CD8-positive, alpha-beta T cell (primary cell): ENCODE measurements at regions of chr1 and their contacts with region 1.

Region 1: GRCh38 chr1:227855687-227856086 is 40.2 kb downstream of the PRSS38 start:
- DNase-seq: no peak
- ATAC-seq: no peak
- H3K4me3 ChIP-seq: no peak overlapping the region
- H3K4me3 Mint-ChIP-seq: no peak overlapping the region
- H3K27ac ChIP-seq: no peak overlapping the region
- H3K27ac Mint-ChIP-seq: no peak overlapping the region
- H3K4me1 ChIP-seq: no peaks in the 10 kb centered on the region
- H3K4me1 Mint-ChIP-seq: no peaks in the 10 kb centered on the region
- H3K27me3 ChIP-seq: no peaks in the 10 kb centered on the region
- H3K27me3 Mint-ChIP-seq: peaks cover 3% of the 10 kb centered on the region
- CTCF ChIP-seq: no peak

Region 2: GRCh38 chr1:227905573-227906487 is 50.1 kb after region 1 on chr1:
- CTCF ChIA-PET with region 1: no interaction called
- POLR2A ChIA-PET with region 1: no interaction called
- intact Hi-C with region 1: loop called in 1 of 2 experiments (anchors 2 kb)
- DNase-seq: peak in 1 of 9 experiments; percentile 11
- ATAC-seq: no peak
- H3K4me3 ChIP-seq: no peak overlapping the region
- H3K4me3 Mint-ChIP-seq: no peak overlapping the region
- H3K27ac ChIP-seq: no peak overlapping the region
- H3K27ac Mint-ChIP-seq: no peak overlapping the region
- H3K4me1 ChIP-seq: no peaks in the 10 kb centered on the region
- H3K4me1 Mint-ChIP-seq: peaks cover 1% of the 10 kb centered on the region
- H3K27me3 ChIP-seq: no peaks in the 10 kb centered on the region
- H3K27me3 Mint-ChIP-seq: peaks cover 2% of the 10 kb centered on the region
- CTCF ChIP-seq: no peak

Region 3: DNA sequence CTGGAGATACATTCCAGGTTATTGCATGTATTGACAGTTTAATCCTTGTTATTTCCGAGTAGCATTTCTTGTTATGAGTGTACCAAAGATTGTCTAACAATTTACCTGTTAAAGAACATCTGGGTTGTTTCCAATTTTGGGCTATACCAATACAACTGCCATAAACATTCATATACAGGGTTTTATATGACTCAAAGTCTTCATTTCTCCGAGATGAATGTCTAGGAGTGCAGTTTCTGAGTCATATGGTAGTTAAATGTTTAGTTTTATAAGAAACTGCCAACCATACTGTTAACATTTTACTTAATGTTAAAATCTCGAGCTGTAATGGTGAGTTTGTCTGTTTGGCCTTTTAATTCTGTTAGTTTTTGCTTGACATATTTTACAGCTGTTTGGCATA is 1425.2 kb after region 1 on chr1:
- CTCF ChIA-PET with region 1: no interaction called
- POLR2A ChIA-PET with region 1: no interaction called
- intact Hi-C with region 1: no loop called
- DNase-seq: no peak
- ATAC-seq: no peak
- H3K4me3 ChIP-seq: no peak overlapping the region
- H3K4me3 Mint-ChIP-seq: no peak overlapping the region
- H3K27ac ChIP-seq: no peak overlapping the region
- H3K27ac Mint-ChIP-seq: no peak overlapping the region
- H3K4me1 ChIP-seq: peaks cover 17% of the 10 kb centered on the region
- H3K4me1 Mint-ChIP-seq: peaks cover 56% of the 10 kb centered on the region
- H3K27me3 ChIP-seq: no peaks in the 10 kb centered on the region
- H3K27me3 Mint-ChIP-seq: no peaks in the 10 kb centered on the region
- CTCF ChIP-seq: no peak